Posterior vena cava (tissue), 2 donors: ENCODE measurements at regions of chr12 and their contacts with region 1.

Region 1: DNA sequence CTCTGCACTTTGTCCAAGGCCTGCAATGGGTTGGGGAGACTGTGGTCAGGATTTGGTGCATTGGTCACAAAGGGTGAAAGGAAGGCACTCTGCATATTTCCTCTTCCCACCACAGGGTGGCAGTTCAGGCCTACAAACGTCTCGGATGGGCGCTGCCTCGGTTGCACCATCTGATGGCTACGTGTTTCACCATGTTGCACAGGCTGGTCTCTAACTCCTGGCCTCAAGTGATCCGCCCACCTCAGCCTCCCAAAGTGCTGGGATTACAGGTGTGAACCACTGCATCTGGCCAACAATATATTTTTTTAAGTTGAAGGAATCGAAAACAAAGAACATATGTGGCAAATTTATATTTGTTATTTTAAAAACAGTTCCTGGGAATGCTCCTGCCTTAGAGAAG is 35.1 kb downstream of the TMBIM6 start:
- DNase-seq: peak; percentile 89

Region 2: GRCh38 chr12:49375406-49375805 is 401.0 kb before region 1 on chr12:
- intact Hi-C with region 1: no loop called
- DNase-seq: no peak

Region 3: DNA sequence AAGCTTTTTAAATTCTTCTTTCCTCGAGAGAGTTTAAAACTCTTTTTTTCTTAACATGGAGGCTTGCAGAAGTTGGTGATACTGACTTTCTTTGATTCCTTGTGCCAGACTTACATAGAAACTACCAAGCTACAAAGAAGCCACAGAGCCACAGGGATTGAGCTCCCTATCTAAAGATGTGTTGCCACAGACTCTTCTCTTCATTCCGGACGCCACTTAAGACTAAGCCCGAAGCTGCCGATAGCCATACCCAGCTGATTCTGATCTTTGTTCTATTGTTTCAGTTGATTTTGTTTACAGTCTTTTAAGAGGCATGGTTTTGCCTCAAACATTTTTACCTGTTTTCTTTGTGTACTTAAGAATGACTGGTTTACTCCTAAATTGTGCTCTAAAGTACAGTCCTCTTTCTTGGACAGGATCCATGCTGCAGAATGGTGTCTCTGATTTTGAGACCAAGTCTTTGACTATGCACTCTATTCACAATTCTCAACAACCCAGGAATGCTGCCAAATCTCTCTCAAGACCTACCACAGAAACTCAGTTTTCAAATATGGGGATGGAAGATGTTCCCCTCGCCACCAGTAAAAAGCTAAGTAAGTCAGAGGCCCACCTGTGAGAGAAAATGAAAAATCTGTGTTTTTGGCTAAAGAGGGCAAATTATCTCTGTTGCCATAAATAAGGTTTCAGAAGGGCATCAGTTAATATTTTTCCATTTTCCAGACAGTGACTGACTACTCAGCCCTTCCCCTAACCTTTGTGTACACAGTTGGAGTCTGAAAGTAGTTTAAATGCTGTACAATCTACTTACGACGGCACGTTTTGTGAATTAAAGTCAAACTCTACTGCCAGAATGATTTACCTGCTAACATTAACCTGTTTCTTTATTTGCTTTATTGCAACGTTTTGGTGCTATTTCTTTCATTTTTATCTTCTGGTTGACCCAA is 279.7 kb before region 1 on chr12:
- intact Hi-C with region 1: no loop called
- DNase-seq: no peak

Region 4: DNA sequence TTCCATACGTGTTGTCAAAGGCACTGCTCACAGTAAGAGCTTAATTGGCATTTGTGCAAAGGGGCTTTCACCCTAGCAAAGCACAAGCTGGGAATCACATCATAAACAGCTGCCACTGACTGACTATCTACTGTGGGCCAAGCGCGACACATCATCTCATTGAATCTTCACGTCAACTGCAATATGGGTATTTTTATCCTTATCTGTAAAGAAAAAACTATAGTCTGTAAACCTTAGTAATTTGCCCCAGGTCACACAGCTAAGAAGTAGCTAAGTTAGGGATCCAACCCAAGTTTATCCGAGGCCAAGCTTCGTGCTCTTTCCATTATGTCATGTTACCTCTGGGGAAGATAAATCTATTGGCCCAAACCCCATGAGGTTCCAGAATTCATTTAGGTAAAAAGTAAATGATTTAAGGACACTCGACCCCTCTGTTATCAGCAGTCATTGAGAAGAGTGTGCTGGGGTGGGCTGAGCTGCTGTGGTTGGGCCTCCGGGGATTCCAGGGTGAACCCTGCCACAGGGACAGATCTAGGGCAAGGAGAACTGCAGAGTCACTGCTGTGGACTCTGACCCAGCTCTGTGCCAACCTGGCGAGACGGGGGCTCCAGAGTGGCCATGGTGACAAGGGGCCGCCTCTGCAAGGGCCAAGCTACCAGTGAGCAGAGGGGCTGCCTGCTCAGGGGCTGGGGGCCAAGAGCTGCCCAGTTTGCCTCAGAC is 24.2 kb after region 1 on chr12:
- intact Hi-C with region 1: no loop called
- DNase-seq: no peak

Region 5: GRCh38 chr12:49866859-49867579 is 90.6 kb after region 1 on chr12:
- intact Hi-C with region 1: loop called in 1 of 2 experiments (anchors 1 kb)
- DNase-seq: peak; percentile 91